MCF 10A (cell line): ENCODE measurements at regions of chr10 and their contacts with region 1.

Region 1: DNA sequence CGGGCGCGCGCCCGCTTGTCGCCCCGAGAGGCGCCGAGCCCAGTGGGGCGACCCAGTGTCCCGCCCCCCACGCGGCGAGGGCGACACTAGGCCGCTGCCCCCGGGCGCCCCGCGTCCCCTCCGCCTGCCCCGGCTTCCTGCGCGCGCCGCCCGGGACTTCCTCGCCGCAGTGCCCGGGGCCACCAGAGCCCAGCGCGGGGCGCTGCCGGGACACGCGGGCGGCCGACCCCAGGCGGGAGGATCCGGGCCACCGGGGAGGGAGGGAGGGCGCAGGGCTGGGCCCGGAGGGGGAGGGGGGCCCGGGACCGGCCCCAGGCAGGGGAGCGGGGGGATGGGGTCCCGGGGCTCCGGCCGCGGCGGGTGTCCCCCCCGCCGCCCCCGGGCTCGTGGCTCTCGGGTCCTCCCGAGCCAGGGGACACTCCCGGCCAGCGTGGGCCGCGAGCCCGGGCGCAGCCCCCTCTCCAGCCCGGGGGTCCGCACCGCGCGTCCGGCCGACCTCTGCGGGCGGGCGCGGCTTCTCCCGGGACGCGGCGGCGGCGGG is 435 bp upstream of the PWWP2B start:
- DNase-seq: peak; percentile 34
- H3K4me3 Mint-ChIP-seq: peak overlapping the region; percentile 81
- H3K27ac Mint-ChIP-seq: no peak overlapping the region
- H3K4me1 Mint-ChIP-seq: peaks cover 11% of the 10 kb centered on the region
- H3K27me3 Mint-ChIP-seq: no peaks in the 10 kb centered on the region
- CTCF ChIP-seq: peak; percentile 21

Region 2: GRCh38 chr10:131997366-131998049 is 399.1 kb before region 1 on chr10:
- CTCF ChIA-PET with region 1: no interaction called
- POLR2A ChIA-PET with region 1: no interaction called
- intact Hi-C with region 1: no loop called
- DNase-seq: peak; percentile 87
- H3K4me3 Mint-ChIP-seq: peak overlapping the region; percentile 54
- H3K27ac Mint-ChIP-seq: peak overlapping the region; percentile 97
- H3K4me1 Mint-ChIP-seq: peaks cover 25% of the 10 kb centered on the region
- H3K27me3 Mint-ChIP-seq: no peaks in the 10 kb centered on the region
- CTCF ChIP-seq: no peak

Region 3: DNA sequence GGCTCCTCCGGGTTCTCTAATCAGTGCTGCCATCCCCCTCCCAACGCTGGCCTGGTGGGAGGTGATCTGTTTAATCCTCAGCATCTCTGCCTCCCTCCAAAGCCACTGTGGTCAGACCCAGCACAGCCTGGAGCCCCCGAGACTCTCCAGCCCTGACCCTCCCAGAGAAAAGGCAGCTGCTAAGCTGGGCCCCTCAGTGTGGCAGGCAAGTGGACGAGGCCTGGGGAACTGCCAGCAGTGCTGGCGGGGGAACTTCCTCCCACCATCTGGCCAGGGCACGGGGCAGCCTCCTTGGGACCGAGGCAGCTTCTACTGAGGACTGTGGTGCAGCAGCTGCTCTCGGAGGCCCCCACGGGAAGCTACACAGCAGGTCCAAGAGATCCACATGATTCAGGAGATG is 158.7 kb before region 1 on chr10:
- CTCF ChIA-PET with region 1: no interaction called
- POLR2A ChIA-PET with region 1: no interaction called
- intact Hi-C with region 1: no loop called
- DNase-seq: no peak
- H3K4me3 Mint-ChIP-seq: no peak overlapping the region
- H3K27ac Mint-ChIP-seq: no peak overlapping the region
- H3K4me1 Mint-ChIP-seq: no peaks in the 10 kb centered on the region
- H3K27me3 Mint-ChIP-seq: no peaks in the 10 kb centered on the region
- CTCF ChIP-seq: no peak

Region 4: GRCh38 chr10:132281915-132282666 is 114.5 kb before region 1 on chr10:
- CTCF ChIA-PET with region 1: no interaction called
- POLR2A ChIA-PET with region 1: no interaction called
- intact Hi-C with region 1: no loop called
- DNase-seq: no peak
- H3K4me3 Mint-ChIP-seq: no peak overlapping the region
- H3K27ac Mint-ChIP-seq: no peak overlapping the region
- H3K4me1 Mint-ChIP-seq: peaks cover 5% of the 10 kb centered on the region
- H3K27me3 Mint-ChIP-seq: no peaks in the 10 kb centered on the region
- CTCF ChIP-seq: no peak

Region 5: GRCh38 chr10:132446661-132447194 is 50.2 kb after region 1 on chr10:
- CTCF ChIA-PET with region 1: interaction called, 6 read pairs
- POLR2A ChIA-PET with region 1: interaction called, 17 read pairs
- intact Hi-C with region 1: loop called (anchors 1 kb)
- DNase-seq: peak; percentile 94
- H3K4me3 Mint-ChIP-seq: peak overlapping the region; percentile 41
- H3K27ac Mint-ChIP-seq: peak overlapping the region; percentile 97
- H3K4me1 Mint-ChIP-seq: peaks cover 30% of the 10 kb centered on the region
- H3K27me3 Mint-ChIP-seq: no peaks in the 10 kb centered on the region
- CTCF ChIP-seq: peak; percentile 47